Head of caudate nucleus (tissue), 42 donors: ENCODE measurements at regions of chrX and their contacts with region 1.

Region 1: GRCh38 chrX:72131317-72132294 is at the start of gene RTL5:
- DNase-seq: peak; percentile 77 to 96 (median 90)

Region 2: DNA sequence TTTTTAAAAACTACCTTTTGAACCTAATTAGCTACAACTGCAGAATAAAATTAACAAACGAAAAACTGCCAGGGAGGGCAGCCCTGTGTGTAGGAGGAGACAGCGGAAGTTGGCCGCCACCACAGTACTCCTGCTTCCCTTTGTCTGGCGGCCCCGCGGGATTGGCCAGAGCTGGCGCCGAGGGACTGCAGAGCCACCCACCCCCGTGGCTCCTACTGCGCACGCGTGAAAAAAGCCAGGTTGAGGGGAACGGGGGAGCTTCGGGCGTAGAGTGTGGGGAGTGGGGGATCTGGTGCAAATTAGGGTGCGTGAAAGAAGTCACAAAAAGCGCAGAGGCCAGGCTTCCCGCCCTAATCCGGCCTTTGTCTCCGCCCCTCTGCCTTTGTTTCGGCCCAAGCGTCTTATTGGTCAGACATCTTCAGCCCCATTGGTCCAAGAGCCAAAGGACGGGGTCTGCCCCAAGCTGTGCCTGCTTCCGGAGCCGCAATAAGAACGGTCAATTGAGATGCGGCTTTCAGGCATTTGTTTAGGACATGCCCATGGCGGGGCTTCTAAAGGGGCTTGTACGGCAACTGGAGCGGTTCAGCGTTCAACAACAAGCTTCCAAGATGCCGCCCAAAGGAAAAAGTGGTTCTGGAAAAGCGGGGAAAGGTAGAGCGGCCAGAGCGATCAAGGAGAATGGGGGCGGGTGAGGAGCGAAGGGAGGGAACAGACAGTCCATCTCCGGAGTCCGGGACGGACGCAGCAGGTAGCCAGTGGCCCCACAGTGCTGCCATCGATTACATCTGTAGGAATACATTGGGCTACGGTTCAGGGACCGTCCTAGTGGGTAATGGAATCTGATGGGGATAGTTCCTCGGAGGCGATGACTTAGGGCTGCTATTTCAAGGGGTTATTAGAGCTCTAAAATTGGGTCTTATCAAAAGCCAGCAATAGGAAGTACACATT is 49.8 kb after region 1 on chrX and contains the start of gene PIN4:
- intact Hi-C with region 1: loop called (anchors 2 kb)
- DNase-seq: peak; percentile 81 to 97 (median 91)